ENCODE measurements at regions of chr14 and their contacts with region 1.

Region 1: DNA sequence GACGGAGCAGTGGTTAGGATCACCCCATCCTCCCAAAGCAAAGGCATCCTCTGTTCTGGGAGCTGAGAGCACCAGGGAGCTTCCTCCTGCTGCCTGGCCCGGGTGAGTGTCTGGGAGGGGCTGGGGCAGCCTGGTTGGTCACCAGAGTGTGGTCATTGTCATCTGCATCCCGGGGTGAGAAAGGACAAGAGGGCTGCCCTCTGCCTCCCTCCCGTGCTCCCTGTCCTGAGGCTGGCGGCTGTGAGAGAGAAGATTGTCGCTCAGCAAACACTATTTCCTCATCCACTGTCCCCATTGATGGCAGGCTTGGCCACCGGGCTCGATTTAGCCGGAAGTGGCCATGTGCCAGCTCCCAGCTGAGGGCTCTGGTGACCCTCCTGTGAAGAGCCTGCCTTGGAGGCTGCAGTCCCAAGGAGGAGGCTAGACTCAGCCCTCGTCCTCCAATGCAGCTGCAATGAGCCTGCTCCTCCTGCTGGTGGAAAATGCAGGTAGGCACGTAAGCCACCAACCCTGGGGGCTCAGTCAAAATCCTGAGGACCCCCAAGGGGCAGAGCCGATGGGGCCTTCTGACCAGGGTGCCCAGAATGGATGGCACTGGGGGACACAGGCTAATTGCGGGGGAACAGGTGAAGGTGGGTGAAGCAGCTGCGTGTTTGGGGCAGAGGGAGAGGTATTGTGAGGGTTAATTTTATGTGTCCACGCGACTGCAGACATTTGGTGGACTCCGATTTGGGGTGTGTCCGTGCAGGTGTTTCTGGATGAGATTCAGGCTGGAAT is 155.7 kb downstream of the KIF26A start:
- DNase-seq: peak; percentile 16 to 42 (median 37)
- H3K4me3 ChIP-seq: no peak overlapping the region
- H3K27ac ChIP-seq: no peak overlapping the region
- H3K4me1 ChIP-seq: peaks cover 12% of the 10 kb centered on the region
- H3K27me3 ChIP-seq: no peaks in the 10 kb centered on the region
- CTCF ChIP-seq: peak in 1 of 3 donors; percentile 17
- EP300 ChIP-seq: no peak
- POLR2A ChIP-seq: no peak

Region 2: GRCh38 chr14:104206281-104206904 is 87.6 kb before region 1 on chr14:
- intact Hi-C with region 1: no loop called
- DNase-seq: no peak
- H3K4me3 ChIP-seq: no peak overlapping the region
- H3K27ac ChIP-seq: no peak overlapping the region
- H3K4me1 ChIP-seq: no peaks in the 10 kb centered on the region
- H3K27me3 ChIP-seq: no peaks in the 10 kb centered on the region
- CTCF ChIP-seq: no peak
- EP300 ChIP-seq: no peak
- POLR2A ChIP-seq: no peak

Region 3: GRCh38 chr14:104224506-104225277 is 69.3 kb before region 1 on chr14:
- intact Hi-C with region 1: loop called in 1 of 4 experiments (anchors 10 kb)
- DNase-seq: peak; percentile 47 to 71 (median 66)
- H3K4me3 ChIP-seq: no peak overlapping the region
- H3K27ac ChIP-seq: peak overlapping the region in 1 of 2 donors; percentile 36
- H3K4me1 ChIP-seq: peaks cover 12% of the 10 kb centered on the region
- H3K27me3 ChIP-seq: no peaks in the 10 kb centered on the region
- CTCF ChIP-seq: peak in 2 of 3 donors; percentile 13 to 45
- EP300 ChIP-seq: no peak
- POLR2A ChIP-seq: no peak